ENCODE measurements at regions of chr12 and their contacts with region 1.

Region 1: GRCh38 chr12:2877047-2877952 is at the starts of genes FOXM1 and RHNO1:
- DNase-seq: peak; percentile 90
- H3K4me3 ChIP-seq: peak within 1 kb of the TSS; percentile 56 to 99 (median 99)
- H3K27ac ChIP-seq: peak within 1 kb of the TSS; percentile 88
- H3K4me1 ChIP-seq: peaks cover 17% of the 10 kb centered on the region
- H3K27me3 ChIP-seq: no peaks in the 10 kb centered on the region
- CTCF ChIP-seq: peak in 1 of 2 donors; percentile 24
- POLR2A ChIP-seq: peak; percentile 81
- total RNA-seq, gene FOXM1: 110 and 136 TPM in 2 replicates
- total RNA-seq, gene RHNO1: 33.8 and 39.9 TPM in 2 replicates

Region 2: DNA sequence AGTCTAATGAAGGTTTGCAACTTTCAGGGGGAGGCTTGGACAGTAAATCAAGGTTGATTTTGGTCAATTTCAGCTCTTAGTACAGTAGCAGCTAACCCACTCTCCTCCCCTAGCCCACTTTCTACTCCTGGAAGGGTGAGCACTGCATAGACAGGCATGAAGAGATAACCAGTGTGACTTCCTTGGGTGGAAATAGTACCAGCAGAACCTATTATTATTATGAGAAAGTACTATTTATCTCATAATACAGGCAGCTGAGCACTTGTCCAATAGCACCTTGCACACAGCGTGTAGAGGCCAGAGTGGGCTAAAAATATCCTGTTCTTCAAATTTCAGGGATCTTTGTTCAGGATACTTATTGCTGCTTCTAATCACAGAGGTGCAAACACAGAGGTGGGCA is 178.7 kb before region 1 on chr12:
- CTCF ChIA-PET with region 1: no interaction called
- POLR2A ChIA-PET with region 1: no interaction called
- dilution Hi-C with region 1: no loop called
- intact Hi-C with region 1: no loop called
- DNase-seq: no peak
- H3K4me3 ChIP-seq: no peak overlapping the region
- H3K27ac ChIP-seq: no peak overlapping the region
- H3K4me1 ChIP-seq: no peaks in the 10 kb centered on the region
- H3K27me3 ChIP-seq: peaks cover 0 to 1% of the 10 kb centered on the region in 2 experiments
- CTCF ChIP-seq: no peak
- POLR2A ChIP-seq: no peak

Region 3: GRCh38 chr12:2845280-2845679 is 32.0 kb before region 1 on chr12:
- CTCF ChIA-PET with region 1: interaction called, 6 read pairs
- POLR2A ChIA-PET with region 1: interaction called, 3 read pairs
- dilution Hi-C with region 1: no loop called
- intact Hi-C with region 1: loop called (anchors 2 kb)
- DNase-seq: peak; percentile 74
- H3K4me3 ChIP-seq: no peak overlapping the region
- H3K27ac ChIP-seq: peak overlapping the region; percentile 75
- H3K4me1 ChIP-seq: peaks cover 23% of the 10 kb centered on the region
- H3K27me3 ChIP-seq: no peaks in the 10 kb centered on the region
- CTCF ChIP-seq: no peak
- POLR2A ChIP-seq: peak; percentile 65

Region 4: DNA sequence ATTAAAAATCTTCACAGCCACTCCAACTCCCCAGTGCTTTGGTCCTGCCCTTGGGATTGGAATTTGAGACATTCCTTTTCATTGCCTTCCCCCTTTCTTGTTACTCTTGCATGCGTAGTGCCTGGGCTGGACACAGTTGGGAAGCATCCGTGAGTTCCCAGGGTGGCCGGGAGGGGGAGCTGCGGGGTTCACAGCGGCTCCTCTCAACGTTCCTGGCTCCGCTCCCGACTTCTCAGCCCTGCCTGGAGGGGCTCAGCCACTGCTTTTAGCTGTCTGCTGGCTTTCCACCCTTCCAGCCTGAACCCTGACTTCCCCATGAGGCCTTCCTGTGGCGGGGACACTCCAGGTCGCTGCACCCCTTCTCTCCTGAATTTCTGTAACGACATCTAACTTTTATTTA is 23.7 kb before region 1 on chr12:
- CTCF ChIA-PET with region 1: interaction called, 10 read pairs
- POLR2A ChIA-PET with region 1: interaction called, 3 read pairs
- dilution Hi-C with region 1: no loop called
- intact Hi-C with region 1: no loop called
- DNase-seq: peak; percentile 69
- H3K4me3 ChIP-seq: no peak overlapping the region
- H3K27ac ChIP-seq: no peak overlapping the region
- H3K4me1 ChIP-seq: peaks cover 4% of the 10 kb centered on the region
- H3K27me3 ChIP-seq: no peaks in the 10 kb centered on the region
- CTCF ChIP-seq: peak; percentile 92 to 96
- POLR2A ChIP-seq: no peak

Region 5: GRCh38 chr12:2890388-2891239 is 13.3 kb after region 1 on chr12 and contains the start of gene TULP3:
- CTCF ChIA-PET with region 1: interaction called, 10 read pairs
- POLR2A ChIA-PET with region 1: interaction called, 5 read pairs
- dilution Hi-C with region 1: no loop called
- intact Hi-C with region 1: loop called (anchors 1 kb)
- DNase-seq: peak; percentile 99
- H3K4me3 ChIP-seq: peak within 1 kb of the TSS; percentile 32 to 76 (median 75)
- H3K27ac ChIP-seq: peak within 1 kb of the TSS; percentile 59
- H3K4me1 ChIP-seq: peaks cover 11% of the 10 kb centered on the region
- H3K27me3 ChIP-seq: no peaks in the 10 kb centered on the region
- CTCF ChIP-seq: peak in 1 of 2 donors; percentile 18
- POLR2A ChIP-seq: peak; percentile 86
- total RNA-seq, gene TULP3: 30.8 and 32.9 TPM in 2 replicates